PC-3 (cell line): ENCODE measurements at regions of chr2 and their contacts with region 1.

Region 1: DNA sequence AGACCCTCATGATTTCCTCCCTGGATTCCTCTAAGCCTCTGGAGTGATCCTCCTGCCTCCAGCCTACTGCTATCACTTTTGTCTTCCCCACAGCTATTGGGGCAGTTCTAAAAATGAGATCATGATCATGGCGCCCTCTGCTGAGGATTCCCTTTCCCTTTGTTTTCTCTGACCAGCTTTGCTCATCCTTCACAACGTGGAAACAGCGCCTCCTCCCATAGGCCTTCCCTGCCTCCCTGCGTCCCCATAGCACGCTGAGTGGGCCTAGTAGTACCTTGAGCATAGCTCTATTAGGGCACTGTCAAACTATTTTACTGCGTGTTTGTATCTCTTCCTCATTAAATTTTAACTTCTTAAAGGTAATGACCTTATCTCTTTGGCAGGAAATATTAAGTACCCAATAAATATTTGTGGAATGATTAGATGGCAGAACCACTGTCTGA is 207.0 kb upstream of the FANCL start:
- DNase-seq: peak; percentile 84
- ATAC-seq: peak; percentile 88
- H3K4me3 ChIP-seq: peak overlapping the region; percentile 27; the same call in 1 of the 2 replicates
- H3K27ac ChIP-seq: peak overlapping the region; percentile 69
- H3K4me1 ChIP-seq: peaks cover 27% of the 10 kb centered on the region
- H3K27me3 ChIP-seq: no peaks in the 10 kb centered on the region
- CTCF ChIP-seq: peak; percentile 94

Region 2: GRCh38 chr2:57759822-57760300 is 688.2 kb before region 1 on chr2:
- CTCF ChIA-PET with region 1: interaction called, 5 read pairs
- POLR2A ChIA-PET with region 1: no interaction called
- intact Hi-C with region 1: loop called (anchors 5 kb)
- DNase-seq: peak; percentile 93
- ATAC-seq: peak; percentile 96
- H3K4me3 ChIP-seq: peak overlapping the region; percentile 45; the same call in 1 of the 2 replicates
- H3K27ac ChIP-seq: peak overlapping the region; percentile 54
- H3K4me1 ChIP-seq: peaks cover 23% of the 10 kb centered on the region
- H3K27me3 ChIP-seq: no peaks in the 10 kb centered on the region
- CTCF ChIP-seq: peak; percentile 95

Region 3: DNA sequence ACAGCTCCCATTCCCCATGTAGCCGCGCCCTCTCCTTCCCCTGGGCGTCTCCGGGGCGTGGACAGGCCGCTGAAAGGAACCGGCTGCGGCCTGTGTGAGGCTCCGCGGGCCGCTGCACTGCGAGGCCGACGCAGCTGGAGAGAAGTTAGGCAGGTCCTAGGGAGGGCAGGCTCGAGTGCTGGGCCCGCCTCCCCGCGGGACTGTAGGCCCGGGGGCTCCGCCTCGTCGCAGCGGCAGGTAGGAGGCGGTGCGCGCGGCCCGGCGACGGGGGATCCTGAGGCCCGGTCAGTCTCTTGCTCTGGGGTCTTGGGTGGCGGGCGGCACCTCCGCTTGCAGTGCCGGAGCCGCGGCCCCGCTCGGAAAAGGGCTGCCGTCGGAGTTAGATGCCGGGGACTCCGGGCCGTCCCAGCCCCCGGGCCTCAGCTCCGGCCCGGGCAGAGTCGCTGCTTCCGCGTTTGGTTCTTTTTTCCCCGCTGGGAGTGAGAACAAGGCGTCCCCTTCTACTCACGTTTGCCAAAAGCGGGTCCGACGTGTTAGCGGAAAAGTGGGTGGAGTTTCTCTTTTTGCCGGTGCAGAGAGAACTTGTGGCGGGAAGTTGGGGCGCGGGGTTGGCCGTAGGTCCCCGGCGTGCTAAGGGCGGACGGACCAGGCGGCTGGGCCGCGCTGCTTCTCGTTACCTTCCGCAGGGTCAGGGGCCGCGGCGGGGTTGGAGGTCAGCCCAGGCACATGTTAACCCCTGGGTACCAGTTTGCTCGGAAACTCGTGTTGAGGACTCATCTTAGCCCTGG is 401.3 kb before region 1 on chr2 and contains the start of gene VRK2:
- CTCF ChIA-PET with region 1: interaction called, 3 read pairs
- POLR2A ChIA-PET with region 1: no interaction called
- intact Hi-C with region 1: loop called (anchors 5 kb)
- DNase-seq: peak; percentile 97
- ATAC-seq: peak; percentile 92
- H3K4me3 ChIP-seq: peak within 1 kb of the TSS; percentile 88
- H3K27ac ChIP-seq: peak within 1 kb of the TSS; percentile 92
- H3K4me1 ChIP-seq: peaks cover 52% of the 10 kb centered on the region
- H3K27me3 ChIP-seq: no peaks in the 10 kb centered on the region
- CTCF ChIP-seq: no peak
- total RNA-seq, gene VRK2: 22.7 and 27.6 TPM in 2 replicates

Region 4: GRCh38 chr2:58289029-58289428 is 159.1 kb before region 1 on chr2:
- CTCF ChIA-PET with region 1: no interaction called
- POLR2A ChIA-PET with region 1: no interaction called
- intact Hi-C with region 1: loop called (anchors 10 kb)
- DNase-seq: peak; percentile 81
- ATAC-seq: peak; percentile 98
- H3K4me3 ChIP-seq: 0 out of 2 replicates have a peak overlapping the region, but pooled peaks have one; percentile 19
- H3K27ac ChIP-seq: peak overlapping the region; percentile 42
- H3K4me1 ChIP-seq: peaks cover 9% of the 10 kb centered on the region
- H3K27me3 ChIP-seq: no peaks in the 10 kb centered on the region
- CTCF ChIP-seq: no peak

Region 5: DNA sequence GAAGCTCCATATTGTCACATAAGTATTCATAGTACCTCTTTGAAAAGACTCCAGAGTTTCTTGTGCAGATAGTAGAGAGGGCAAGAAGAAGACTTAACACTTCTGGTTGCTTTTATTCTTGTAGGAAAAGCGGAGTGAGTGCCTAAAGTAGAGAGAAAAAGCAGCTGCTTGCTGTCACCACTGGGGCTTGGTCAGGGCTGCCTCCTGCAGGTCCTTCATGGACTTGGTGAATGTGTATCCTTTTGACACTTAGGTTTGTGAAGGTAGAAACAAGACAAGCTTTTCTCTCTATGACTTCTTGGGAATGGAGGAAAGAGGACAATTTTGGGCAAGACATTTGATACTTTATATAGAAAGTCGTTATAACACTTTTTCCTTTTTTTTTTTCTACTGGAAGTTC is 105.9 kb after region 1 on chr2:
- CTCF ChIA-PET with region 1: interaction called, 4 read pairs
- POLR2A ChIA-PET with region 1: no interaction called
- intact Hi-C with region 1: loop called (anchors 5 kb)
- DNase-seq: peak; percentile 51
- ATAC-seq: peak; percentile 57; the same call in 1 of the 2 replicates
- H3K4me3 ChIP-seq: no peak overlapping the region
- H3K27ac ChIP-seq: no peak overlapping the region
- H3K4me1 ChIP-seq: no peaks in the 10 kb centered on the region
- H3K27me3 ChIP-seq: no peaks in the 10 kb centered on the region
- CTCF ChIP-seq: peak; percentile 65

Region 6: DNA sequence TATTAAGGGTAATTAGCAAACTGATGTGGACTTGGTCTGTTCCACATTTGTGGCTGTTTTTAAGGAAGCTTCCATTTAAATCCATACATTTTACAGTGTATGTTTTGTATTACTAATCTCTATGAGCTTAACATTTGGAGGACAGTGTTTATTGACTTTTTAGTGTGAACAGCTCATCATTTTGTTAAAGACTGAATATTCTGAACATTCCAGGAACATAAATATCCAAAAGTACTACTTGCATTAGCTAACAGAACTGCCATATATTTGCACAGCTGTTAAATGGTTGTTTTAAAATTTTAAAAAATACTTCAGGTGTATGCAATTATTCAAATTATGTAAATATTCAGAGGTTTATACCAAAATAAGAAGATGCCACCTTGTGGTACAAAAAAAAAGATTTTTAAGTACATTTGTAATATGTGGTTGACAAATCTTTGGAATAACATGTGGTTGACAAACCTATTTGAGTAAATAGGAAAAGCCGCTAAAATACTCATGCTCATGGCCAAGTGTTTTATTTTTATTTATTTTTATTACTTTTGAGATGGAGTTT is 232.7 kb after region 1 on chr2:
- CTCF ChIA-PET with region 1: interaction called, 3 read pairs
- POLR2A ChIA-PET with region 1: no interaction called
- intact Hi-C with region 1: loop called (anchors 2 kb)
- DNase-seq: peak; percentile 58
- ATAC-seq: peak; percentile 75
- H3K4me3 ChIP-seq: no peak overlapping the region
- H3K27ac ChIP-seq: no peak overlapping the region
- H3K4me1 ChIP-seq: no peaks in the 10 kb centered on the region
- H3K27me3 ChIP-seq: no peaks in the 10 kb centered on the region
- CTCF ChIP-seq: peak; percentile 69